Tibial artery (tissue), 4 donors: ENCODE measurements at regions of chr19 and their contacts with region 1.

Region 1: GRCh38 chr19:38335949-38336637 is 463 bp downstream of the CATSPERG start:
- DNase-seq: peak; percentile 95 to 97
- H3K4me3 ChIP-seq: peak overlapping the region; percentile 68 to 95
- H3K27ac ChIP-seq: peak overlapping the region; percentile 91 to 99
- H3K4me1 ChIP-seq: peaks cover 0 to 30% (median 19%) of the 10 kb centered on the region in 4 donors
- H3K27me3 ChIP-seq: no peaks in the 10 kb centered on the region
- CTCF ChIP-seq: no peak

Region 2: DNA sequence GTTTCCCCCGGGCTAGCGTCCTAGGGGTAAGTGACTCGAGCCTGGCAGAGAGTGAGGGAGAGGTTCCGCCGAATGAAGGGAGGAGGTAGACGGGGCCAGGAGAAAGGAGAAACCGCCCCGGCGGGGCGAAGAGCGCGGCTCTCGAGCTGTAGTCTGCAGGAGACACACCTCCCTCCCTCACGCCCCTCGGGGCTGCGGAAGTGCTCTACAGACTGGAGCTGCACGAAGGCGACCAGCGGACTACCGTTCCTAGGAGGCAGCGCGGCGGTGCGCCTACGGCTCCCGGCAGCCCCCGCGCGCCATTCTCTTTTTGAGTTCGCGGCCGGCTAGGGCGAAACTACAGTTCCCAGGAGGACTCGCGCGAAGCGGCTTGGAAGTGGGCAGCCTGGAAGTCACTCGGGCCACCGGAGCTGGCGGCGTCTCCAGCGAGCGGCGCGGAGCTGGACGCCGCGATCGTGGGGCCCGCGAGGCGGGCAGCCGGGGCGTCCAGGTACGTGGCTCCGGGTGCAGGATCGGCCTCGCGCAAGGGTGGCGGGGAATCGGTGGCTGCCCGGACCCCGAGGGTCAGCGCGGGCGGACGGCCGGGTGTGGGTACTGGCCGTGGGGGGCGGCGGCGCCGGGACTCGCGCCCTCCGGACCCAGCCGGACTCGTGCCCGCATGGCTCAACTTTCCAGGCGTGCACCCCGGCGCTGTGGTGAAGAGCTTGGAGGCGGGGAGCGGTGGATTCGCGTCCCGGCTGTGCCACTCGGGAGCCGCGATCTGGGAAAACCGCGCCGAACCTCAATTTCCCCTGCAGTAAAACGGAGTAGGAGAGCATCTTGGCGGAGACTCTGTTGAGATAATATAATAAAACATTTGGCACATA is 429.0 kb before region 1 on chr19 and contains the start of gene SIPA1L3:
- intact Hi-C with region 1: loop called (anchors 10 kb)
- DNase-seq: peak; percentile 94 to 96
- H3K4me3 ChIP-seq: peak within 1 kb of the TSS; percentile 80 to 87
- H3K27ac ChIP-seq: peak within 1 kb of the TSS; percentile 67 to 72
- H3K4me1 ChIP-seq: peaks cover 0 to 21% (median 11%) of the 10 kb centered on the region in 4 donors
- H3K27me3 ChIP-seq: no peaks in the 10 kb centered on the region
- CTCF ChIP-seq: no peak

Region 3: GRCh38 chr19:38190061-38190460 is 146.0 kb before region 1 on chr19:
- intact Hi-C with region 1: no loop called
- DNase-seq: no peak
- H3K4me3 ChIP-seq: no peak overlapping the region
- H3K27ac ChIP-seq: no peak overlapping the region
- H3K4me1 ChIP-seq: no peaks in the 10 kb centered on the region
- H3K27me3 ChIP-seq: no peaks in the 10 kb centered on the region
- CTCF ChIP-seq: no peak

Region 4: GRCh38 chr19:38204096-38204495 is 132.0 kb before region 1 on chr19:
- intact Hi-C with region 1: no loop called
- DNase-seq: no peak
- H3K4me3 ChIP-seq: no peak overlapping the region
- H3K27ac ChIP-seq: no peak overlapping the region
- H3K4me1 ChIP-seq: peaks cover 0 to 3% (median 1%) of the 10 kb centered on the region in 4 donors
- H3K27me3 ChIP-seq: peaks cover 0 to 11% of the 10 kb centered on the region in 2 donors
- CTCF ChIP-seq: no peak

Region 5: DNA sequence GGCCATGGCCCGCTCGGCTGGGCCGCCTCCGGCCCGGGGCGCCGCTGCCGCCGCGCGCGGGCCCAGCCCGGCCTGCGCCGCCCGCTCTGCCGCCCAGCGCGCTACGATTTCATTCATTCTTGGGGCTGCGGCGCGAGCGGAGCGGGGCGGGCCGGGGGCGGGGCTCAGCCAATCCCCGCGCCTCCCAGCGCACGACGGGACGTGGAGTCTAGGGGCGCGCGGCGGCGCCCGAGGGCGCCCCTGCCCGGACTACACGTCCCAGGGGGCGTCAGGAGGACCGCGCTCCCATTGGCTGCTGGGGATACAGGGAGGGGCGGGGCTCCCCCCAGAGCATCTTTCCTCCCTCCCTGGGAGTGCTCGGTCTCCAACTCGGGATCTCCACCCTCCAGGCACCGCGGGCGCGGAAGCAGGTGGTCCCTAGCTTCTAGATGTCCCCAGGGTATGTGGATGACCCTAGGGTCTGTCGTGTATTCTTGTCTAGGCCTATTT is 106.5 kb before region 1 on chr19:
- intact Hi-C with region 1: loop called (anchors 5 kb)
- DNase-seq: no peak
- H3K4me3 ChIP-seq: peak overlapping the region in 1 of 2 donors; percentile 16
- H3K27ac ChIP-seq: no peak overlapping the region
- H3K4me1 ChIP-seq: peaks cover 0 to 22% (median 18%) of the 10 kb centered on the region in 4 donors
- H3K27me3 ChIP-seq: peaks cover 6 to 62% of the 10 kb centered on the region in 2 donors
- CTCF ChIP-seq: no peak

Region 6: GRCh38 chr19:38374429-38375176 is 38.5 kb after region 1 on chr19 and contains the start of gene PSMD8:
- intact Hi-C with region 1: loop called (anchors 5 kb)
- DNase-seq: peak; percentile 99 to 100
- H3K4me3 ChIP-seq: peak within 1 kb of the TSS; percentile 66 to 95
- H3K27ac ChIP-seq: peak within 1 kb of the TSS; percentile 82 to 91
- H3K4me1 ChIP-seq: peaks cover 0 to 25% (median 20%) of the 10 kb centered on the region in 4 donors
- H3K27me3 ChIP-seq: no peaks in the 10 kb centered on the region
- CTCF ChIP-seq: peak in 1 of 2 experiments; percentile 11

Region 7: GRCh38 chr19:38409631-38410133 is 73.6 kb after region 1 on chr19:
- intact Hi-C with region 1: no loop called
- DNase-seq: no peak
- H3K4me3 ChIP-seq: no peak overlapping the region
- H3K27ac ChIP-seq: no peak overlapping the region
- H3K4me1 ChIP-seq: peaks cover 0 to 3% (median 0%) of the 10 kb centered on the region in 4 donors
- H3K27me3 ChIP-seq: peaks cover 0 to 18% of the 10 kb centered on the region in 2 donors
- CTCF ChIP-seq: no peak